ENCODE measurements at regions of chr1 and their contacts with region 1.

Region 1: DNA sequence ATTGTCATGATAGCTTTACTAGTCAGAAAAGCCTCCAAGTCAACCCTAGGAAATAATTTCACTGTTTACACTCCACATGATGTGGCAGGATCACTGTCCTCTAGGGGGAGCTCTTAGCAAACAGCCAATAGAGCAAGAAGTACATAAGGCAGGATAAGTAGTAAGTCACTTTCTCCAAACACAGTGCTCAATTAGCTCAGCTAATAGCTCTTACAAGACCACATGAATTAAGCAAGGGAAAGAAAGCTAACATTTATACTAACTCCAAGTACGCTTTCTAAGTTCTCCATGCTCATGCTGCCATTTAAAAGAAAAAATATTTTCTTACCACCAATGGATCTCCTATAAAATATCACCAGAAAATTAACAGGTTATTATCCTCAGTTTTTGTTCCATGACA is 66.9 kb upstream of the LRIF1 start:
- DNase-seq: peak; percentile 45
- ATAC-seq: peak; percentile 95
- H3K4me3 ChIP-seq: no peak overlapping the region
- H3K27ac ChIP-seq: no peak overlapping the region
- H3K4me1 ChIP-seq: no peaks in the 10 kb centered on the region
- H3K27me3 ChIP-seq: no peaks in the 10 kb centered on the region
- CTCF ChIP-seq: peak; percentile 80 to 90 (median 90)
- EP300 ChIP-seq: no peak
- POLR2A ChIP-seq: no peak
- RAD21 ChIP-seq: peak; percentile 69

Region 2: GRCh38 chr1:111045033-111045722 is 14.6 kb after region 1 on chr1:
- CTCF ChIA-PET with region 1: interaction called, 31 read pairs
- POLR2A ChIA-PET with region 1: no interaction called
- RAD21 ChIA-PET with region 1: interaction called, 9 read pairs
- SMC1A ChIA-PET with region 1: interaction called, 8 read pairs
- in situ Hi-C with region 1: no loop called
- intact Hi-C with region 1: no loop called
- DNase-seq: no peak
- ATAC-seq: peak; percentile 72
- H3K4me3 ChIP-seq: no peak overlapping the region
- H3K27ac ChIP-seq: no peak overlapping the region
- H3K4me1 ChIP-seq: peaks cover 5% of the 10 kb centered on the region
- H3K27me3 ChIP-seq: no peaks in the 10 kb centered on the region
- CTCF ChIP-seq: no peak
- EP300 ChIP-seq: no peak
- POLR2A ChIP-seq: no peak
- RAD21 ChIP-seq: no peak

Region 3: DNA sequence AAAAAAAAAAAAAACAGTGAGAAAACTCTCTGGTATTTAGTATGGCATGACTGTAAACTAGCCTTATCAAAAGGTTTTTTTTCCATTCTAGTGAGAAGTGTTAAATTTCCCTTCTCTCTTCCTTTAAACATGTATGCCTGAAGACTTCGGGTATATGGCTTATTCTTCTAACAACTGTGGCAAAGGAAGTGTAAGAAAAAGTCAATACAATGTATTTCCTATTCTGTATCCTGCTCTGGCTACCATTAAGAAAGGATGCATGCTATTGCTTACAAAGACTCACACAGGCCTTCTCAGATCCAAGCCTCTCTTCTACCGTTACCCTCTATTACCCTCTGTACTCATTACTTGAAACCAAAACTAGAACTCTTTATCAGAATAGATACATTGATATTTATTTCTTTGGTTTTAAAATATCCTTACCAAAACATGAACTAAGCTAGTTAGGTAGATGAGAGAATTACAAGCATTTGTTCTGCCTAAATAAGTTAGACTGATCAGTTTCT is 117.8 kb after region 1 on chr1:
- CTCF ChIA-PET with region 1: interaction called, 15 read pairs
- POLR2A ChIA-PET with region 1: no interaction called
- RAD21 ChIA-PET with region 1: no interaction called
- SMC1A ChIA-PET with region 1: interaction called, 5 read pairs
- in situ Hi-C with region 1: no loop called
- intact Hi-C with region 1: loop called (anchors 5 kb)
- DNase-seq: no peak
- ATAC-seq: peak; percentile 77
- H3K4me3 ChIP-seq: peak overlapping the region; percentile 13
- H3K27ac ChIP-seq: peak overlapping the region; percentile 30
- H3K4me1 ChIP-seq: peaks cover 15% of the 10 kb centered on the region
- H3K27me3 ChIP-seq: no peaks in the 10 kb centered on the region
- CTCF ChIP-seq: no peak
- EP300 ChIP-seq: no peak
- POLR2A ChIP-seq: no peak
- RAD21 ChIP-seq: no peak

Region 4: DNA sequence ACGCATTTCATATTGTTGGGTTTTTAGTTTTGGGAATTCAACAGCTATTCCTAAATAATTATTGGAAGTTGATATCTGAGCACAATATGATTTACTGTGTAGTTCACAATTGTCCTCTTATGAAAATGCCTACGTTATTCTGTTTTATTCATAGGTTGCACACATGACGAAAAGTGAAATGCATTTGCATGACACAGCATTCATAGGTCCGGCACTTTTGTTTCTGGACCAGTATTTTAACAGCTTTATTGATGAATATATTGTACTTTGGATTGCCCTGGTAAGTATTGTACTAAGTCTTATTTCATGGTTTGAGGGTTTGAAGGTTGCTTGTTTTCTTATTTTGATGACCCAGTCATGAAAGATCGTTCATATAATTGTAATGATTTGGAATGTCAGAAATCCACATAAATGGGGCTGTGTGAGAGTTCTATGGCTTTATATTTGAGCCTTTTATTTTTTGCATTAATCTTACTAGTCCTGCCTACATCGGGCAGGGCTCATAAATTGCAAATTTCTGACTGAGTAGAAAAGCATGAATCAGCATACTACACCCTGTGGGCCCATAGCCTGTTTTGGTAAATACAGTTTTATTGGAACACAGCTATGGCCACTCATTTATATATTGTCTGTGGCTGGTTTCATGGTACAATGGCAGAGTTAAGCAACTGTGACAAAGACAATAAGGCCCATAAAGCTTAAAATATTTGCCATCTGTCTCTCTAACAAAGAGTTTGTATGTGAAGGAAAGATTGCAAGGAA is 152.9 kb after region 1 on chr1:
- CTCF ChIA-PET with region 1: interaction called, 17 read pairs
- POLR2A ChIA-PET with region 1: no interaction called
- RAD21 ChIA-PET with region 1: interaction called, 7 read pairs
- SMC1A ChIA-PET with region 1: interaction called, 8 read pairs
- in situ Hi-C with region 1: no loop called
- intact Hi-C with region 1: no loop called
- DNase-seq: no peak
- ATAC-seq: 0 out of 3 replicates have a peak, but pooled peaks have one; percentile 17
- H3K4me3 ChIP-seq: no peak overlapping the region
- H3K27ac ChIP-seq: no peak overlapping the region
- H3K4me1 ChIP-seq: no peaks in the 10 kb centered on the region
- H3K27me3 ChIP-seq: no peaks in the 10 kb centered on the region
- CTCF ChIP-seq: no peak
- EP300 ChIP-seq: no peak
- POLR2A ChIP-seq: no peak
- RAD21 ChIP-seq: no peak

Region 5: GRCh38 chr1:111214074-111214801 is 183.6 kb after region 1 on chr1:
- CTCF ChIA-PET with region 1: interaction called, 38 read pairs
- POLR2A ChIA-PET with region 1: interaction called, 3 read pairs
- RAD21 ChIA-PET with region 1: interaction called, 21 read pairs
- SMC1A ChIA-PET with region 1: interaction called, 21 read pairs
- in situ Hi-C with region 1: no loop called
- intact Hi-C with region 1: no loop called
- DNase-seq: peak; percentile 81
- ATAC-seq: peak; percentile 23
- H3K4me3 ChIP-seq: no peak overlapping the region
- H3K27ac ChIP-seq: peak overlapping the region; percentile 100
- H3K4me1 ChIP-seq: peaks cover 62% of the 10 kb centered on the region
- H3K27me3 ChIP-seq: no peaks in the 10 kb centered on the region
- CTCF ChIP-seq: no peak
- EP300 ChIP-seq: no peak
- POLR2A ChIP-seq: no peak
- RAD21 ChIP-seq: 0 out of 2 replicates have a peak, but pooled peaks have one; percentile 1

Region 6: GRCh38 chr1:111769517-111770146 is 739.0 kb after region 1 on chr1:
- CTCF ChIA-PET with region 1: interaction called, 11 read pairs
- POLR2A ChIA-PET with region 1: no interaction called
- RAD21 ChIA-PET with region 1: interaction called, 3 read pairs
- SMC1A ChIA-PET with region 1: interaction called, 8 read pairs
- in situ Hi-C with region 1: no loop called
- intact Hi-C with region 1: no loop called
- DNase-seq: peak; percentile 44
- ATAC-seq: peak; percentile 79
- H3K4me3 ChIP-seq: no peak overlapping the region
- H3K27ac ChIP-seq: no peak overlapping the region
- H3K4me1 ChIP-seq: no peaks in the 10 kb centered on the region
- H3K27me3 ChIP-seq: no peaks in the 10 kb centered on the region
- CTCF ChIP-seq: peak; percentile 66 to 87 (median 78)
- EP300 ChIP-seq: no peak
- POLR2A ChIP-seq: no peak
- RAD21 ChIP-seq: peak; percentile 92

Measured in GM12878 (cell line).